ENCODE measurements at regions of chr7 and their contacts with region 1.

Region 1: DNA sequence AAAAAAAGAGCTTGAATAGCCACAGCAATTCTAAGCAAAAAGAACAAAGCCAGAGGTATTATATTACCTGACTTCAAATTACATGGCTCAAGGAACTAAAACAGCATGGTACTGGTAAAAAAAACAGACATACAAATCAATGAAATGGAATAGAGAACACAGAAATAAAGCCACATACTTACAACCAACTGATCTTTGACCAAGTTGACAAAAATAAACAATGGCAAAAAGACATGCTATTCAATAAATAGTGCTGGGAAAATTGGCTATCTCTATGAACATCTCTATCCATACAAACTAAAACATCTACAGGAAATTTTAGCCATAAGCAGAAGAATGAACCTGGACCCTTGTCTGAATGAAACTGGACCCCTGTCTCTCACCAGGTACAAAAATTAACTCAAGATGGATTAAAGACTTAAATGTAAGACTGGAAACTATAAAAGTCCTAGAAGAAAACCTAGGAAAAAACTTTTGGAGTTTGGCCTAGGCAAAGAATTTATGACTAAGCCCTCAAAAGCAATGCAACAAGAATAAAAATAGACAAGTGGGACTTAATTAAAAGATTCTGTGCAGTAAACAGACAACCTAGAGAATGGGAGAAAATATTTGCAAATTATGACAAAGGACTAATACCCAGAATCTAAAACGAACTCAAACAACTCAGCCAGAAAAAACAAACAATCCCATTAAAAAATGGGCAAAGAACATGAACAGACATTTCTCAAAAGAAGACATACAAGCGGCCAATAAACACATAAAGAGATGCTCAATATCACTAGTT is 72.7 kb upstream of the DDC start:
- DNase-seq: no peak
- H3K4me3 ChIP-seq: no peak overlapping the region
- H3K27ac ChIP-seq: no peak overlapping the region
- H3K4me1 ChIP-seq: peaks cover 0 to 3% (median 0%) of the 10 kb centered on the region in 4 donors
- H3K27me3 ChIP-seq: no peaks in the 10 kb centered on the region
- CTCF ChIP-seq: no peak
- EP300 ChIP-seq: no peak
- POLR2A ChIP-seq: no peak

Region 2: DNA sequence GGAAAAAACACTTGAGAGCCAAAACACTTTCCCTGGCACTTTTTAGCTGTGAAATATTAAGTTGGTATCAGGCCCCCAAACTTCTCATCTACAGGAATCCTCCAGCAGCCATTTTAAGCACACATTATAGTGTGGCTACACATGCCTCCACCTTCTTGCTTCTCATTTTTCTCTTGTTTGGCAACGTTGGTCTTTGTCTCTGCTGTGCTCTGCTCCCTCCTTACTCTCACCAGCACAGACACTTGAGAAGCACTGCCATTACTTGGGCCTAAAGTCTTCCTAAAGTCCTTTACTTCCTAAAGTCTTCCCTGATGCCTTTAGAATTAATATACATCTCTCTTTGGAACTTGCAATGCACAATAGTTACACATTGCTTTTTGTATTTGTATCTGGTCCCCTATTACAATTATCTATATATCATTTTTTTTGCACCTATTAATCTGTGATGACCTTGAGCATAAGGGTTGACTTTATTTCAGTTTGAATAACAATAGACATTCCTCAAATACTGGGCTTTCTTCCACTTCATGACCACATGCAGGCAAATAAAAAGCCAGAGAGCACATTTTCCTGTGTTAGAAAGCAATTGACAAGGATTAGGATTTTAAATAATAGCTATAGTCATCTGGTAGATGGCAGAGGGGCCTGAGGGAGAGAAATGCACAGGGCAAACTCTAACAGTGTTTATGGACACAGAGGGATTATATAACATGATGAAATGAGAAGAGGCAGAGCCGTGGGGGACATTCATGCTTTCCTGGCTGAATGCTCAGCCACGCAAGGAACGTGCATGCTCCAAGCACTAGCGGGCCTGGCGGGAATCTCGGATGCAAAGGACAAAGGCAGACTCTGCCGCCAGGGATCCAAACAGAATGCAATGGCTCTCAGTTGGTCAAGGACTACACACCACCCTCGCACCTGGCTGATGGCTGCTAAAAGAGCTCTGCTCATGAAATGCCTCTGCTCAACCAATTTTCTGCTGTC is 1614.3 kb before region 1 on chr7:
- in situ Hi-C with region 1: no loop called
- intact Hi-C with region 1: no loop called
- DNase-seq: no peak
- H3K4me3 ChIP-seq: no peak overlapping the region
- H3K27ac ChIP-seq: no peak overlapping the region
- H3K4me1 ChIP-seq: no peaks in the 10 kb centered on the region
- H3K27me3 ChIP-seq: no peaks in the 10 kb centered on the region
- CTCF ChIP-seq: no peak
- EP300 ChIP-seq: no peak
- POLR2A ChIP-seq: no peak

Region 3: GRCh38 chr7:50393547-50394252 is 244.2 kb before region 1 on chr7:
- in situ Hi-C with region 1: no loop called
- intact Hi-C with region 1: no loop called
- DNase-seq: peak; percentile 44
- H3K4me3 ChIP-seq: no peak overlapping the region
- H3K27ac ChIP-seq: peak overlapping the region in 1 of 4 donors; percentile 25
- H3K4me1 ChIP-seq: peaks cover 0 to 13% (median 0%) of the 10 kb centered on the region in 4 donors
- H3K27me3 ChIP-seq: no peaks in the 10 kb centered on the region
- CTCF ChIP-seq: no peak
- EP300 ChIP-seq: no peak
- POLR2A ChIP-seq: no peak

Region 4: DNA sequence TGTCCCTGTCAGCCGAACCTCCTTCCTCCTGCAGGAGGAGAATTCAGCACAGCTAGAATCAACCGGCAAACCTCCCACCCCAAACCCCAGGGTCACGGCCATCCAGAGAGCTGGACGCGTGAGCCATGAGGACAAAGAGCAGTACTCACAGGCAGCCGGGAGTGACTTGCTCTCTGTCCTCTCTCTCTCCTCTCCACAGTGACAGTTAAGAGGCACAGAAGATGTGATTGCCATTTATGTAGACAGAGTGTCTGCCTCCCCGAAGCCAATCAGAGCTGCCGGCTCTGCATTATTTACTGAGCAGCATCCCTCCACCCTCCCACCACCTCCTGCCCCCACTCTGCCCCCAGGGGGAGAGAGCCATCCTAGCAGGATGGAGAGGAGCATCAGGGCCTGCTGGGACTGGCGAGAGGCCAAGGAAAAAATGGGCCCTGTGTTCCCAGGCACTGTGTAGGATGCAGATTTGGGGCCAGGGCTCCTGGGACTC is 77.0 kb before region 1 on chr7:
- in situ Hi-C with region 1: no loop called
- intact Hi-C with region 1: no loop called
- DNase-seq: no peak
- H3K4me3 ChIP-seq: no peak overlapping the region
- H3K27ac ChIP-seq: no peak overlapping the region
- H3K4me1 ChIP-seq: peaks cover 0 to 27% (median 3%) of the 10 kb centered on the region in 4 donors
- H3K27me3 ChIP-seq: no peaks in the 10 kb centered on the region
- CTCF ChIP-seq: no peak
- EP300 ChIP-seq: no peak
- POLR2A ChIP-seq: no peak

Region 5: DNA sequence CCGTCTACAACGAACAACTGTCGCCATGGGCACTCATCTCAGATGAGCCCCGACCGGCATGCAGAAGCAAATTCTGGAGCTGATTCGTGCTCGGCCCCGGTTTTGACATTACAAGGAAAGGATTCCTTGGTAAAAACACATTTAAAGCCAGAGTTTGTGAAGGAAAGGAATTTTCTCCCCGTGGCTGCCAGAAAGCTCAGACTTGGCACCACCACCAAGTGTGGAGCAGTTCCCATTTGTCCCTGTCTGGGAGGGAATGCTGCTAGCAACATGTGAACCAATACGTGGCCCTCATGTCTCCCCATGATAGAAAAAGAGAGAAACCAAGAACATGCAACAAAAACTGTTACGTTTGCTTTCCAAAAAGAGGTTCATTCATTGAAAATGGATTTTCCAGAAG is 17.5 kb before region 1 on chr7:
- in situ Hi-C with region 1: no loop called
- intact Hi-C with region 1: no loop called
- DNase-seq: no peak
- H3K4me3 ChIP-seq: no peak overlapping the region
- H3K27ac ChIP-seq: peak overlapping the region in 1 of 4 donors; percentile 11
- H3K4me1 ChIP-seq: peaks cover 0 to 5% (median under 1%) of the 10 kb centered on the region in 4 donors
- H3K27me3 ChIP-seq: no peaks in the 10 kb centered on the region
- CTCF ChIP-seq: no peak
- EP300 ChIP-seq: no peak
- POLR2A ChIP-seq: no peak

Region 6: DNA sequence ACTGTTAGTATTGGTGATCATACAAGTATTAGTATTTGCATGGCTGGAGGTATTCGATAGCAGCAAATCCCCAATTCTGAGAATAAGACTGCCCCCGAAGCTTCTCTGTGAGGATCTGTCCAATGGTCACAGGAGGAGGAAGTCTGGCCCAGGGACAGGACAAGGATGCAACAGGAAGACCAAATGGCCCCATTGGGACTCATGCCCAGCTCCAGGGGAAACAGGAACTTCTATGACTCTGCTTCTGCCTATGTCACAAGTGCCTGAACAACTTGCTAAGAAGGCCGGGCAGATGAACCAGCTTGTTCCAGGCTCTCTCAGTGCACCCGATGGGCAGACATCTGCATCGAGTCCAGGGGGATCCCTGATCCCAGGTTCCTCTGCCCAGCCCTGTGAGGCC is 316.8 kb after region 1 on chr7:
- in situ Hi-C with region 1: no loop called
- intact Hi-C with region 1: loop called (anchors 5 kb)
- DNase-seq: no peak
- H3K4me3 ChIP-seq: no peak overlapping the region
- H3K27ac ChIP-seq: no peak overlapping the region
- H3K4me1 ChIP-seq: peaks cover 0 to 4% (median 0%) of the 10 kb centered on the region in 4 donors
- H3K27me3 ChIP-seq: no peaks in the 10 kb centered on the region
- CTCF ChIP-seq: no peak
- EP300 ChIP-seq: no peak
- POLR2A ChIP-seq: no peak

Measured in transverse colon (tissue), 4 donors.